ENCODE measurements at regions of chr11 and their contacts with region 1.

Region 1: DNA sequence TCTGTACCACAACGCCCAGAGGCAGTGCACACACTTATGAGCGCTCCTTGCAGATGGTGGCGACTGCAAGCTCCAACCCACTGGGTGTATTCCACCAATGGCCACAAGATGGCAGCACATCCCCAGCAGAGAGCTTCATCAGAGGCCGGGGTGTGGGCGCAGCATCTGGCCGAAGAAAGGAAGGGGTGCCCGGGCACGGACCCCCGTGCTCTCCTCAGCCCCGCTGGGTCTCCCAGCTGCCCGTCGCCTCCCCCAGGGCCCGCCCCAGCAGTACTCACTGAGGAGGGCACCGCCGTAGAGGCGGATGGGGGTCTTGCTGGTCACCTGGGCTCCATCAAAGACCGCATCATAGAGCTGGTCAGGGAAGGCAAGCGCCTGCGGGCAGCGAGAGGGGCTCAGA is 14.2 kb downstream of the TP53I11 start:
- DNase-seq: peak; percentile 64 to 98
- H3K4me3 ChIP-seq: 0 out of 8 replicates have a peak overlapping the region, but pooled peaks of 1 of the 4 experiments have one; percentile 18
- H3K27ac ChIP-seq: no peak overlapping the region
- H3K4me1 ChIP-seq: peaks cover 0 to 11% (median 7%) of the 10 kb centered on the region in 4 experiments; a peak in 6 of 7 replicates
- H3K27me3 ChIP-seq: no peaks in the 10 kb centered on the region
- CTCF ChIP-seq: peak in 2 of 3 experiments; percentile 91 to 98; a peak in 3 of 4 replicates
- EP300 ChIP-seq: no peak
- POLR2A ChIP-seq: no peak
- RAD21 ChIP-seq: peak; percentile 98 to 99

Region 2: DNA sequence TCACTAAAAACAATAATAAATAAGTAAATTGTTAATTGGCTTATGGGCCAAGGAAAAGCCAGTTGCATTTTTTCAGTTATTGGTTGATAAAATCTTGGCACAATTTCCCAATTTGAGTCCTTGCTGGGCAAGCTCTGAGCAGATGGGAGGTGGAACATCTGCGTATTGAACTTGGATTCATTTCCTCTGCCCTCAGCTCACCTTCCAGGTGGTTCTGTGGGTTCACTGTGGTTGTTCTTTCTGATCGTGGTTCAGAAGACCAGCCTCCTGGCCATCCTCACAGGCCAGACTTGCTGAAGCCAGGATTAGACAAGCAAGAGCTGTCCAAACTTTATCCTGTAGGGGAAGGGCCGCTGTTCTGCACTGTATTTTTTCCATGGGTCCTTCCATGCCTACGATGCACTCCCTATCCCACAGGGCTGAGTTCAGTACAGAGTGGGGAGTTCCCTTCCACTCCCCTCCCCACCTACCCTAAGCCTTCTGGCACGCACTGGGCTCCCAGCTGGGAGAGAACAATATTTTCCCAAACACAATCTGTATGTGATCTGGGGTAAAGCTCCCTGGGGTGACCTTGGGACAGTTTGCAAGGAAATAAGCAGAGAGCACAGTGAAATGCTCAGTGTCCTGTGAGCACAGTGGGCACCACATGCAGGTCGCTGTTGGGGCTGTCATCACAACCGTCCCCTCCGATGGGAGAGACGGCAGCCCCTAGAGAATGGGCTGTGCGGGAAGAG is 57.6 kb after region 1 on chr11:
- CTCF ChIA-PET with region 1: interaction called, 731 read pairs
- POLR2A ChIA-PET with region 1: interaction called, 4 read pairs
- DNase-seq: peak in 1 of 2 experiments; percentile 39
- H3K4me3 ChIP-seq: no peak overlapping the region
- H3K27ac ChIP-seq: no peak overlapping the region
- H3K4me1 ChIP-seq: no peaks in the 10 kb centered on the region
- H3K27me3 ChIP-seq: no peaks in the 10 kb centered on the region
- CTCF ChIP-seq: no peak
- EP300 ChIP-seq: no peak
- POLR2A ChIP-seq: no peak
- RAD21 ChIP-seq: no peak

Region 3: GRCh38 chr11:45025716-45026492 is 89.4 kb after region 1 on chr11:
- CTCF ChIA-PET with region 1: interaction called, 41 read pairs
- POLR2A ChIA-PET with region 1: interaction called, 3 read pairs
- DNase-seq: no peak
- H3K4me3 ChIP-seq: no peak overlapping the region
- H3K27ac ChIP-seq: no peak overlapping the region
- H3K4me1 ChIP-seq: peaks cover 6 to 16% (median 11%) of the 10 kb centered on the region in 4 experiments; a peak in 6 of 7 replicates
- H3K27me3 ChIP-seq: no peaks in the 10 kb centered on the region
- CTCF ChIP-seq: no peak
- EP300 ChIP-seq: no peak
- POLR2A ChIP-seq: no peak
- RAD21 ChIP-seq: no peak

Region 4: GRCh38 chr11:45031912-45032519 is 95.5 kb after region 1 on chr11:
- CTCF ChIA-PET with region 1: interaction called, 17 read pairs
- POLR2A ChIA-PET with region 1: no interaction called
- DNase-seq: no peak
- H3K4me3 ChIP-seq: no peak overlapping the region
- H3K27ac ChIP-seq: no peak overlapping the region
- H3K4me1 ChIP-seq: no peaks in the 10 kb centered on the region
- H3K27me3 ChIP-seq: no peaks in the 10 kb centered on the region
- CTCF ChIP-seq: no peak
- EP300 ChIP-seq: no peak
- POLR2A ChIP-seq: no peak
- RAD21 ChIP-seq: no peak

Measured in H1 (cell line).